B cell (primary cell): ENCODE measurements at regions of chr6 and their contacts with region 1.

Region 1: DNA sequence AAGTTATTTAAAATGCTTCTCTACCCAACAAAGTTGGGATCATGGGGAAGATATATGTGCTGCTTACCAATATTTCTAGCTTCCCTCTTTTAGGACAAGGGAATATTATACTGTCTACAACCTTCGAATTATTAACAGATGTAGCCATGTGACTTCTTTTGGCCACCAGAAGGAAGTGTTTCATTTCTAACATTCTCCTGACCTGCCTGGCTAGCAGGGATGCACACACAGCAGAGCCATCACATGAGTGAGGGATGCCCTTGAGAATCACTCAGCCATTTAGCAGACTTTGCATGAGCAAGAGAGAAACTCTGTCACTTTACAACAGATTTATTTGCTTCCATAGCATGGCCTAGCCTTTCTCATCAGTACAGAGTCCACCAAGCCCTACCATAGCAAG is 230.7 kb upstream of the MARCKS start:
- DNase-seq: peak; percentile 58
- ATAC-seq: no peak
- H3K4me3 ChIP-seq: no peak overlapping the region
- H3K4me3 Mint-ChIP-seq: peak overlapping the region; percentile 0
- H3K27ac ChIP-seq: no peak overlapping the region
- H3K27ac Mint-ChIP-seq: peak overlapping the region; percentile 17
- H3K4me1 ChIP-seq: peaks cover 46 to 53% of the 10 kb centered on the region in 2 donors
- H3K4me1 Mint-ChIP-seq: peaks cover 53% of the 10 kb centered on the region
- H3K27me3 ChIP-seq: no peaks in the 10 kb centered on the region
- H3K27me3 Mint-ChIP-seq: no peaks in the 10 kb centered on the region
- CTCF ChIP-seq: no peak

Region 2: DNA sequence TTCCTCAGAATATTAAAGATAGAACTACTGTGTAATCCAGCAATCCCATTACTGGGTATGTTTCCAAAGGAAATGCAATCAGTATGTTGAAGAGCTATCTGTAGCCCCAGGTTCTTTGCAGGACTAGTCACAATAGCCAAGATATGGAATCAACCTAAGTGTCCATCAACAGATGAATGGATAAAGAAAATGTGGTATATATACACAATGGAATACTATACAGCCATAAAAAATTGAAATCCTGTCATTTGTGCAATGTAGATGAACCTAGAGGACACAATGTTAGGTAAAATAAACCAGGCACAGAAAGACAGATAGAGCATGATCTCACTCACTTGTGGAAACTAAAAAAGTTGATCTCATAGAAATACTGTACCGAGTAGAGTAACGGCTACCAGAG is 75.3 kb before region 1 on chr6:
- CTCF ChIA-PET with region 1: no interaction called
- POLR2A ChIA-PET with region 1: no interaction called
- intact Hi-C with region 1: no loop called
- DNase-seq: no peak
- ATAC-seq: no peak
- H3K4me3 ChIP-seq: no peak overlapping the region
- H3K4me3 Mint-ChIP-seq: no peak overlapping the region
- H3K27ac ChIP-seq: no peak overlapping the region
- H3K27ac Mint-ChIP-seq: no peak overlapping the region
- H3K4me1 ChIP-seq: no peaks in the 10 kb centered on the region
- H3K4me1 Mint-ChIP-seq: no peaks in the 10 kb centered on the region
- H3K27me3 ChIP-seq: no peaks in the 10 kb centered on the region
- H3K27me3 Mint-ChIP-seq: no peaks in the 10 kb centered on the region
- CTCF ChIP-seq: no peak

Region 3: DNA sequence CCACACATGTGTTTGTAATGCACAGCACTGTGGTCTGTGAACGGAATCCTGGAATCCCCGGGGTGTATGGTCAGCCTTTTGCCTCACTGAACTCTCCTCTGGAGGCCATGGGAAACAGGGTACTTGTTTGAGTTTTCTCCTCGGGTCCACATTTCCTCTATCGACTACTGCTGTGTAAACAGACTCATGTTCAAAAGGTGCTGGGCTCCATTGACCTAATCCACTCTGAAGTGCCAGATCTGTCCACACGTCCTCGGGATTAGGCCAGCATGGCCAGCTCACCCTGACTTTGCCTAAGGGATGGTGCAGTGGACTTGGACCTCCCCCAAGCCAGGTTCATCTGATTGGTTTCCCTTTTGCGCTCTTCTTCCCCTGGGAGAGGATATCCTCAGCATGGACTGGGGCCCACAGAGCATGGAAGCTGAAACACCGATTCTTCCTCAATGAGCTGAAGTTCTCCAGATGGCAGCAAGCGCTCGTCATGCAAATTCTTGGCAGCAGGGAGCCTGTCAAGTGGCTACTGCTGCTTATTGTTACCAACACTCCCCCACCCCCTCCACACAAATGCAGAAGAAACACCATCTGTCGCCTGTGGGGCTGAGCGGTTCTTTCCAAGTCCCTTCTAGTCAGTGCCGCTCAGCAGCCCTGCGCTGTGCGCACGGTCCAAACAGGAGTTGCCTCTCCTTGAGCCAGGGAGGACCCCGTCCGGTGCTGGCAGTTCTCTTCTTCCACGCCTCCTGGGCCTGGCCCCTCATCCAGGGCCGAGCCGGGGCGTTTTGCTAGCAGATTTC is 61.9 kb before region 1 on chr6:
- CTCF ChIA-PET with region 1: no interaction called
- POLR2A ChIA-PET with region 1: no interaction called
- intact Hi-C with region 1: loop called (anchors 5 kb)
- DNase-seq: peak; percentile 74
- ATAC-seq: peak; percentile 91
- H3K4me3 ChIP-seq: peak overlapping the region in 1 of 5 experiments; percentile 27
- H3K4me3 Mint-ChIP-seq: peak overlapping the region; percentile 77
- H3K27ac ChIP-seq: no peak overlapping the region
- H3K27ac Mint-ChIP-seq: peak overlapping the region; percentile 65
- H3K4me1 ChIP-seq: peaks cover 3 to 11% of the 10 kb centered on the region in 2 donors
- H3K4me1 Mint-ChIP-seq: peaks cover 24% of the 10 kb centered on the region
- H3K27me3 ChIP-seq: no peaks in the 10 kb centered on the region
- H3K27me3 Mint-ChIP-seq: no peaks in the 10 kb centered on the region
- CTCF ChIP-seq: no peak

Region 4: DNA sequence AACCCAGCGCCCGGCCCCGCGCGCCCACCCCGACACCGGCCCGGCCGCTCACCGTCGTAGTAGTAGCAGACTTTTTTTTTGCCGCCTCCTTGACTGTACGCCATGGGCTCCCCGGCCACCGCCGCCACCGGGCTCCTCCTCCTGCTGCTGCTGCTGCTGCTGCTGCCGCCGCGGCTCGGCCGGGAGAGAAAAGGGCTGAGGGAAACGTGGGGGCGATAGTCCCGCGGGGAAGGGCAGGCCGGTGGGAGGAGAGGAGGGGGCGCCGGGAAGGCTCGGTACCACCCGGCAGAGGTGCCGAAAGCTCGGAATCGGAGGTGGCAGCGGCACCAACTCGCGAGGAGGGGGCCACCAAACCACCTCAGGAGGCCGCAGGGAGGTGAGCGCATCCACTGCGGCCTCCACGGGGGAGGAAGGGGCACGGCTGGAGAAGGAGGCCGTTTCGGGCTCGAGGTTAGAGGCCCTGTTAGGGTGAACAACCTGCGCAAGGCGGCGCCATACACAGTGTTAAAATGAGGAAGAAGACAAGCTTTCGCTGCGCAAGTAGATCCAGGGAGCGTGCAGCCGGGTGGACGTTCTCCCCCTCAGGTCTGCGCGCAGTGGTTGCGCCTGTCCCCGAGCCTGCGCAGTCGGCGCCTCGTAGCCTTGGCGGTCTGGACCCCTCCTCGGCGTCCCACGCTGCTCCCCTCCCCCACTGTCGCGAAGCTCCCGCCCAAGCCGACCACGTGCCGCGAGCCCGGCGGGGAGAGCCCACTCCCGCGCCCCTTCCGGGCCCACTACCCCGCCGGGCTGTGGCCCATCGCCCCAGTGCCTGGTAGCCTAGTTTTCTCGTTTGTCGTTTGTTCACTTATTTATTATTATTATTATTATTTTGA is 344.6 kb after region 1 on chr6 and contains the start of gene HDAC2:
- CTCF ChIA-PET with region 1: no interaction called
- POLR2A ChIA-PET with region 1: no interaction called
- intact Hi-C with region 1: loop called (anchors 2 kb)
- DNase-seq: peak; percentile 94
- ATAC-seq: peak; percentile 83
- H3K4me3 ChIP-seq: peak within 1 kb of the TSS; percentile 53 to 99 (median 86)
- H3K4me3 Mint-ChIP-seq: peak within 1 kb of the TSS; percentile 100
- H3K27ac ChIP-seq: peak within 1 kb of the TSS; percentile 91 to 92
- H3K27ac Mint-ChIP-seq: peak within 1 kb of the TSS; percentile 99
- H3K4me1 ChIP-seq: peaks cover 19 to 24% of the 10 kb centered on the region in 2 donors
- H3K4me1 Mint-ChIP-seq: peaks cover 43% of the 10 kb centered on the region
- H3K27me3 ChIP-seq: no peaks in the 10 kb centered on the region
- H3K27me3 Mint-ChIP-seq: no peaks in the 10 kb centered on the region
- CTCF ChIP-seq: peak; percentile 18
- total RNA-seq, gene HDAC2: 52.7 and 58.3 TPM in 2 replicates